Activated naive CD4-positive, alpha-beta T cell treated with anti-CD3 and anti-CD28 coated beads for 36 hours (primary cell): ENCODE measurements at regions of chr3 and their contacts with region 1.

Region 1: DNA sequence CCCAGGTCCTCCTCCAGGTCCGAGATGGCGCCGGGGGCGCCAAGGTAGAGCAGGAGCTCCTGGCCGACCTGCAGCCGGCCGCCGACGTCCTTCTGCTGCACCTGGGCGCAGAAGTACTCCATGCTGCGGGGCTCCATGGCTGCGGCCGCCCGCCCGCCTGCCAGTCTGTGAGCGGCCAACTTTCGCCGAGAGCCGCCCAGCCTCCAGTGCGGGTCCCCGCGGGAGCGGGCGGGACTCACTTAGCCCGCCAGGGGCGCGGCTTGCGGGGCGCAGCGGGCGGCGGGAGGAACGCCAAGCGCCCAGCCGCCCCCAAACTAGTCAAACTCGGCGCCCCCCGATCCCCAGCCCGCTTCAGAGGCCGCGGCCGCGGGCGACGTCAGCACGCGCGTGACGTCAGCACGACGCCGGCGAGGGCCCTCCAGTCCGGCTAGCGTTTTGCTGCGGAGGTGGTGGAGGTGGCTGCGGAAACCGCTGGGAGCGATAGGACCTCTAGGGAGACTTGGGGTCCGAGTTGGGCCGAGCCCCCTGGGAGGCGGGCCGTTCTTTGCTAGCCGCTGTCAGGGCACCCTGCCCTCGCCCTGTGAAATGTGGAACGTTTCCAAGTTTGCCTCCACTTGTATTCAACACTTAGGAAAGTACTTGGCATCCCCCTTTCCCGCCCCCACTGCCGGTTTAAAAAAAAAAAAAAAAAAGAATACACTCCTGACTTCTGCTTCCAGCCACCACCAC is at the start of gene CLASP2:
- DNase-seq: peak; percentile 83
- H3K4me3 Mint-ChIP-seq: peak within 1 kb of the TSS; percentile 86
- H3K27ac Mint-ChIP-seq: peak within 1 kb of the TSS; percentile 91
- H3K4me1 Mint-ChIP-seq: peaks cover 10% of the 10 kb centered on the region
- H3K27me3 Mint-ChIP-seq: no peaks in the 10 kb centered on the region
- total RNA-seq, gene CLASP2: 40.4 to 41.4 TPM

Region 2: GRCh38 chr3:33113772-33114621 is 604.0 kb before region 1 on chr3 and contains the start of gene CRTAP:
- CTCF ChIA-PET with region 1: no interaction called
- intact Hi-C with region 1: loop called (anchors 1 kb)
- DNase-seq: peak; percentile 86
- H3K4me3 Mint-ChIP-seq: peak within 1 kb of the TSS; percentile 78
- H3K27ac Mint-ChIP-seq: no peak within 1 kb of the TSS
- H3K4me1 Mint-ChIP-seq: peaks cover 36% of the 10 kb centered on the region
- H3K27me3 Mint-ChIP-seq: no peaks in the 10 kb centered on the region
- total RNA-seq, gene CRTAP: 48.1 to 51.1 TPM

Region 3: GRCh38 chr3:33372218-33373081 is 345.6 kb before region 1 on chr3:
- CTCF ChIA-PET with region 1: interaction called, 3 read pairs
- intact Hi-C with region 1: loop called (anchors 1 kb)
- DNase-seq: peak; percentile 62
- H3K4me3 Mint-ChIP-seq: no peak overlapping the region
- H3K27ac Mint-ChIP-seq: no peak overlapping the region
- H3K4me1 Mint-ChIP-seq: peaks cover 5% of the 10 kb centered on the region
- H3K27me3 Mint-ChIP-seq: peaks cover 11% of the 10 kb centered on the region

Region 4: DNA sequence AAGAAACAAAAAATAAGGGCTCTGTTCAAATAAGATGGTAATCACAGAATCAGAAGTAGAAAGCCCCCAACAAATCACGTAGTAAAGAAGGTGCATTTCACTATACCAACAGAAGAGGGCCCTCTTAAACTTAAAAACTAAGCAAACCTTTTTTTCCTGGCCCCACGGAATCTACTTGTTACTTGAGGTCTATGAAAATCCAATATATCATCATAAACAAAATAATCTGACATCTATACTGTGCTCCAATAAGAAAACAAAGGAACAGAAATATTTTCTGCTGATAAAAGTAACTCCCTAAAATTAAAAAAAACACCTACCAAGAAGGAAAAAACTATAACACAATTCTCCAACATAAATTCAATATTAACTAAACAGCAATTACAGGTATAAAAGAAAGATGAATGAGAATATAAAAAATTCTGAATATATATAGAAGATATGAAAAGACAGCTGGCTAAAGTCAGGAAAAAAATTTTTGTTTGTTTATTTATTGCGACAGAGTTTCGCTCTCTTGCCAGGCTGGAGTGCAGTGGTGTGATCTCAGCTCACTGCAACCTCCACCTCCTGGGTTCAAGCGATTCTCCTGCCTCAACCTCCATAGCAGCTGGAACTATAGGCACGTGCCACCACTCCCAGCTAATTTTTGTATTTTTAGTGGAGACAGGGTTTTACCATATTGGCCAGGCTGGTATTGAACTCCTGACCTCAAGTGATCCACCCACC is 81.7 kb before region 1 on chr3:
- CTCF ChIA-PET with region 1: interaction called, 7 read pairs
- intact Hi-C with region 1: loop called (anchors 1 kb)
- DNase-seq: no peak
- H3K4me3 Mint-ChIP-seq: no peak overlapping the region
- H3K27ac Mint-ChIP-seq: no peak overlapping the region
- H3K4me1 Mint-ChIP-seq: no peaks in the 10 kb centered on the region
- H3K27me3 Mint-ChIP-seq: no peaks in the 10 kb centered on the region

Region 5: GRCh38 chr3:33787328-33788009 is 69.4 kb after region 1 on chr3:
- CTCF ChIA-PET with region 1: interaction called, 7 read pairs
- intact Hi-C with region 1: loop called (anchors 1 kb)
- DNase-seq: peak; percentile 74
- H3K4me3 Mint-ChIP-seq: peak overlapping the region; percentile 48
- H3K27ac Mint-ChIP-seq: no peak overlapping the region
- H3K4me1 Mint-ChIP-seq: peaks cover 9% of the 10 kb centered on the region
- H3K27me3 Mint-ChIP-seq: no peaks in the 10 kb centered on the region